H1 (cell line): ENCODE measurements at regions of chr20 and their contacts with region 1.

Region 1: GRCh38 chr20:3115190-3116107 is 30.9 kb upstream of the AVP start:
- DNase-seq: peak; percentile 31 to 64
- H3K4me3 ChIP-seq: no peak overlapping the region
- H3K27ac ChIP-seq: no peak overlapping the region
- H3K4me1 ChIP-seq: no peaks in the 10 kb centered on the region; a peak in 2 of 7 replicates
- H3K27me3 ChIP-seq: no peaks in the 10 kb centered on the region
- CTCF ChIP-seq: peak; percentile 54 to 90 (median 64)
- EP300 ChIP-seq: no peak
- POLR2A ChIP-seq: no peak
- RAD21 ChIP-seq: peak; percentile 66 to 72

Region 2: DNA sequence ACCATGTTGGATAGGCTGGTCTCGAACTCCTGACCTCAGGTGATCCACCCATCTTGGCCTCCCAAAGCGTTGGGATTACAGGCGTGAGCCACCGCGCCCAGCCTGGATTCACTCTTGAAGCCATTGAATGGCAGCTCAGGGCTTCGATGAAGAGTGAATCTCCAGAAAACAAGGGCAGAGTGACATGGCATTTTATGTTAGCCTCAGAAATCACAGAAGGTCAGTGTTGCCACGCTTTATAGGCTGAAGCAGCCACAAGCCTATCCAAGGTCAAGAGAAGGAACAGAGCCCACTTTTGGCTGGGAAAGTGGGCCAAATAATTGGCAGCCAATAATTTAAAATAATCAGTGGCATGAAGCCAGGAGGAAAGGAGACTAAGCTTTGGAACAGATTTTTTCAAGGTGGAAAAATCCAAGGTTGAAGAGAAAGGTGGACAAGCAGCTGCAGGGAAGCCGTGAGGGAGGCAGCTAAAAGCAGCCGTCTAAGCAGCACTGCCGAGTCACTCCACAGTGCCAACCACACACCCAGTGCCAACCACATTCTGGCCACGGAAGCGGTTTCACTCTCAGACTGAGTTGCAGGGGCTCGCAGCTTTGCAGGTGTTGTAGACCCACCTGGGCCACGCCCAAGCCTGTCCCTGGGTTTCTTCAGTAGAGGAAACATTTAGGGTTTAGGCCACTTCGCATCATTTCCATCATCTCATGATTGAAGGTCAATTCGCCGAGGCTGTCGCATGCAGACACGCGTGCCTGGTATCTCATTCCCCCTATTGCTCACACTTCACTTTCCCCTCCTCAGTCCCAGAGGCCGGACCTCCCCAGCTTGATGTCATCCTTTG is 13.5 kb before region 1 on chr20:
- CTCF ChIA-PET with region 1: interaction called, 60 read pairs
- POLR2A ChIA-PET with region 1: no interaction called
- DNase-seq: no peak
- H3K4me3 ChIP-seq: no peak overlapping the region
- H3K27ac ChIP-seq: no peak overlapping the region
- H3K4me1 ChIP-seq: peaks cover 0 to 5% (median under 1%) of the 10 kb centered on the region in 4 experiments; a peak in 3 of 7 replicates
- H3K27me3 ChIP-seq: no peaks in the 10 kb centered on the region
- CTCF ChIP-seq: no peak
- EP300 ChIP-seq: no peak
- POLR2A ChIP-seq: no peak
- RAD21 ChIP-seq: no peak

Region 3: GRCh38 chr20:3128275-3128984 is 13.0 kb after region 1 on chr20:
- CTCF ChIA-PET with region 1: interaction called, 38 read pairs
- POLR2A ChIA-PET with region 1: no interaction called
- DNase-seq: no peak
- H3K4me3 ChIP-seq: no peak overlapping the region
- H3K27ac ChIP-seq: no peak overlapping the region
- H3K4me1 ChIP-seq: no peaks in the 10 kb centered on the region
- H3K27me3 ChIP-seq: no peaks in the 10 kb centered on the region
- CTCF ChIP-seq: no peak
- EP300 ChIP-seq: no peak
- POLR2A ChIP-seq: no peak
- RAD21 ChIP-seq: no peak